SK-N-SH (cell line): ENCODE measurements at regions of chr4 and their contacts with region 1.

Region 1: GRCh38 chr4:77203380-77204197 is 46.6 kb downstream of the CCNG2 start:
- DNase-seq: peak; percentile 61
- H3K4me3 ChIP-seq: no peak overlapping the region
- H3K27ac ChIP-seq: no peak overlapping the region
- H3K4me1 ChIP-seq: no peaks in the 10 kb centered on the region; a peak in 1 of 4 replicates
- H3K27me3 ChIP-seq: peaks cover 21% of the 10 kb centered on the region
- CTCF ChIP-seq: peak; percentile 74
- EP300 ChIP-seq: no peak
- RAD21 ChIP-seq: peak; percentile 89

Region 2: DNA sequence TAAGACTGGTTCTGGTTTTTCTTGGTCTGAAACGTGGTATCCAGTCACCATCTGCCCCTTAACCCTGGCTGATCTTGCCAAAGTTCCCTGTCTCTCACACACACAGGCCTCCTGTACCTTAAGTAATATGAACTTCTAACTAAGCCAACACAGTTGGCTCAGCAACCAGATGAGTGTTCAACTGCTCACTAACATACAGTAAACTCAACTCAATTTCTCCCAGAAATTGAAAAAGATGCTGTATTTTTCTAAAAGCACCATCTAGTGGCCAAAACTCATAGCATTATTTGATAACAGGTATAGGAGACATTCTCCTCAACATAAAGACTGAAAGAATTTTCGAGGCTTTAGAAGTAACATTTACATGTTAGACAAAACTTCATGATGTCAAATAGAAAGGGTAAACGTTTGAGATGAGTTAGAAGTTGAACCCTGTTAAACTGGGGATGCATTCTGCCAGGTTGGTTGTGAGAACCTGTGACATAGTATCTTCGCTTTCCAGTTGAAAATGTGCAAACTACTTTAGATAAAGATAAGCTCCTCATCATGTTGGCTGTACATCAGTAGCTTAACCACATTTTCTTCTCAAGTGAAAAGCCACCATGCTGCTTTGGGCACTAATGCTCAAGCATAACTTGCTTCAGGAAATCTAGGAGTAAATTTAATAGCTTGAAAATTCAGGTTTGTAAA is 159.0 kb before region 1 on chr4:
- CTCF ChIA-PET with region 1: interaction called, 31 read pairs
- POLR2A ChIA-PET with region 1: no interaction called
- DNase-seq: no peak
- H3K4me3 ChIP-seq: no peak overlapping the region
- H3K27ac ChIP-seq: peak overlapping the region; percentile 43 to 44
- H3K4me1 ChIP-seq: peaks cover 5 to 7% of the 10 kb centered on the region in 2 experiments; a peak in 3 of 4 replicates
- H3K27me3 ChIP-seq: no peaks in the 10 kb centered on the region
- CTCF ChIP-seq: peak; percentile 83
- EP300 ChIP-seq: no peak
- RAD21 ChIP-seq: peak; percentile 62

Region 3: GRCh38 chr4:77110730-77111129 is 92.9 kb before region 1 on chr4:
- CTCF ChIA-PET with region 1: interaction called, 10 read pairs
- POLR2A ChIA-PET with region 1: no interaction called
- DNase-seq: no peak
- H3K4me3 ChIP-seq: no peak overlapping the region
- H3K27ac ChIP-seq: no peak overlapping the region
- H3K4me1 ChIP-seq: no peaks in the 10 kb centered on the region
- H3K27me3 ChIP-seq: no peaks in the 10 kb centered on the region; the same call in 1 of the 2 replicates
- CTCF ChIP-seq: no peak
- EP300 ChIP-seq: no peak
- RAD21 ChIP-seq: no peak

Region 4: DNA sequence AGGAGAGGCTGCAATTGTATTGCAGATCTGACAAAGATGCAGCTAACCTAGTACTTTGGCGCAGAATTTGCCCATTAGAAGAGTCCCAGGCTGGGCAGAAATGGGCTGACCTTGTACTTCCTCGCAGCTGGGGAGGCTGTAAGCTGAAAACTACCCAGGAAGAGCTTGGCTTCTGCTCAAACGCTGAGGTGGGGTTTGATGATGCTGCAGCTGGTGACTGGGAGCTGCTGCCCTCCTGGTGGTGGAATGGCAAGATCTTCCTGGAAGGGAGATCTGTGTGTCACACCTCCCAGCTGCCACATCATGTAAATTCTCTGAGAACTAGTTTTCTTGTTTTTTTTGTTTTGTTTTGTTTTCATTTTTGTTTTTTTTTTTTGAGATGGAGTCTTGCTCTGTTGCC is 29.2 kb before region 1 on chr4:
- CTCF ChIA-PET with region 1: interaction called, 10 read pairs
- POLR2A ChIA-PET with region 1: no interaction called
- DNase-seq: no peak
- H3K4me3 ChIP-seq: no peak overlapping the region
- H3K27ac ChIP-seq: no peak overlapping the region
- H3K4me1 ChIP-seq: no peaks in the 10 kb centered on the region
- H3K27me3 ChIP-seq: no peaks in the 10 kb centered on the region; the same call in 1 of the 2 replicates
- CTCF ChIP-seq: no peak
- EP300 ChIP-seq: no peak
- RAD21 ChIP-seq: no peak

Region 5: DNA sequence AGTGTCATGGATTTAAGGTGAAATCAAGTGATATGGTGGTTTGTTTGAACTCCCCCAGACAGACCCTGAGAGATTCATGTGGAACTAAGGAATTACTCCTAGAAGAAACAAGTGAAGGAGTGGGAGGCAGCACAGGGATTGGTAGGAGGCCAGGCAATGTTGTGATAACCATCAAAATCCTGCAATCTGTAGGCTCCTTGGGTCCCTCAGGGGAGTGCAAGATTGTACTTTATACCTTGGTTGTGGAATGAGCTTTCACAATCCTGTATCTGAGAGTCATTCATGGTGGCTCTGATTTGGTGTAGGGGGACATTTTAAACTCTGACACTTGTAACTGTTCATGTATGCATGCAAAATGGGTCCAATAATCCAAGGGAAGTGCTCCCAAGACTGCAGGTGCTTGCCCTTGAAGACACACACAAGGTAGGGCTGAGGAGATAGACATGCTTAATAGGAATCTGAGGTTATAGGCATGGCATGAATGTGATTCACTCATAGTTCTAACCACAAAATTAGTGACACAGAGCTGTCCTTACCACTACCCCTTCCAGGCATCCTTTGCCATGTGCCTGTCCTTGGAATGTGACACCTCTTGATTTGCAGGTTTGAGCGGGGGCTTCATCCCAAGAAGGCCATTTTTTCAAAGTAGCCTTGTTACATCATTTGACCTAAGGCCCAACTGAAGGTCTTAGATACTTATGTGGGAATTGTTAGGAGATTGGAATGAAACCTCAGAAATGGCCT is 65.7 kb after region 1 on chr4:
- CTCF ChIA-PET with region 1: no interaction called
- POLR2A ChIA-PET with region 1: no interaction called
- DNase-seq: no peak
- H3K4me3 ChIP-seq: no peak overlapping the region
- H3K27ac ChIP-seq: no peak overlapping the region
- H3K4me1 ChIP-seq: no peaks in the 10 kb centered on the region
- H3K27me3 ChIP-seq: no peaks in the 10 kb centered on the region
- CTCF ChIP-seq: no peak
- EP300 ChIP-seq: no peak
- RAD21 ChIP-seq: no peak